Posterior vena cava (tissue), 2 donors: ENCODE measurements at regions of chr2 and their contacts with region 1.

Region 1: DNA sequence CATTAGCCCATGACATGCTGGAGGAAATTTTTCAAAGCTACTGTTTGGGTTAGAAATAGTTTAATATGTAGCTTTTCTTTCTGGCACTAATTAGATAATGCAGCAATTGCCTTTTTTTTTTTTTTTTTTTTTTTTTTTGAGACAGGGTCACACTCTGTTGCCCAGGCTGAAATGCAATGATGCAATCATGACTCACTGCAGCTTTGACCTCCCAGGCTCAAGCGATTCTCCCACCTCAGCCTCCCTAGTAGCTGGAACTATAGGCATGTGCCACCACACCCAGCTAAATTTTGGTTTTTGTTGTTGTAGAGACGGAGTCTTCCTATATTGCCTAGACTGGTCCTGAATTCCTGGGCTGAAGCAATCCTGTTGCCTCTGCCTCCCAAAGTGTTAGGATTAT is 136.2 kb downstream of the SP100 start:
- DNase-seq: no peak

Region 2: GRCh38 chr2:229884775-229885699 is 667.1 kb before region 1 on chr2:
- intact Hi-C with region 1: loop called in 1 of 2 experiments (anchors 5 kb)
- DNase-seq: no peak

Region 3: GRCh38 chr2:230505162-230505561 is 47.0 kb before region 1 on chr2:
- intact Hi-C with region 1: no loop called
- DNase-seq: no peak

Region 4: DNA sequence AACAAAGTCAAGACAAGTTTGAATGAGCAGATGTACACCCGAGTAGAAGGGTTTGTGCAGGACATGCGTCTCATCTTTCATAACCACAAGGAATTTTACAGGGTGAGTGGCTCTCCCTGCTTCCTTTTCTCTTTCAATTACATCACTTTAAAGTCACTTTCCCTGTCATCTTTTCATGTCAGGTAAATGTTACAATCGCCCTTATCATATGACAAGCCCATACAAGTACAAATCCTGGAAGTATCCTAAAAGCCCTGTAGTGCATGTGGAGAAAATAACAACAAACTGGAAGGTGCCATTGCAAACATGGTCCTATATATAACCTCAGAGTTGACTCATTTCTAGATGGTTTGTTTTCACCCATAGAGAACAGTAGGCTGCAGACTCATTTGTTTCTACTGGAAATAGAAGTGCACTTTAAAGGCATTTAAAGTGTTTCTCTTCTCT is 10.2 kb before region 1 on chr2:
- intact Hi-C with region 1: no loop called
- DNase-seq: no peak